GM12878 (cell line): ENCODE measurements at regions of chr17 and their contacts with region 1.

Region 1: DNA sequence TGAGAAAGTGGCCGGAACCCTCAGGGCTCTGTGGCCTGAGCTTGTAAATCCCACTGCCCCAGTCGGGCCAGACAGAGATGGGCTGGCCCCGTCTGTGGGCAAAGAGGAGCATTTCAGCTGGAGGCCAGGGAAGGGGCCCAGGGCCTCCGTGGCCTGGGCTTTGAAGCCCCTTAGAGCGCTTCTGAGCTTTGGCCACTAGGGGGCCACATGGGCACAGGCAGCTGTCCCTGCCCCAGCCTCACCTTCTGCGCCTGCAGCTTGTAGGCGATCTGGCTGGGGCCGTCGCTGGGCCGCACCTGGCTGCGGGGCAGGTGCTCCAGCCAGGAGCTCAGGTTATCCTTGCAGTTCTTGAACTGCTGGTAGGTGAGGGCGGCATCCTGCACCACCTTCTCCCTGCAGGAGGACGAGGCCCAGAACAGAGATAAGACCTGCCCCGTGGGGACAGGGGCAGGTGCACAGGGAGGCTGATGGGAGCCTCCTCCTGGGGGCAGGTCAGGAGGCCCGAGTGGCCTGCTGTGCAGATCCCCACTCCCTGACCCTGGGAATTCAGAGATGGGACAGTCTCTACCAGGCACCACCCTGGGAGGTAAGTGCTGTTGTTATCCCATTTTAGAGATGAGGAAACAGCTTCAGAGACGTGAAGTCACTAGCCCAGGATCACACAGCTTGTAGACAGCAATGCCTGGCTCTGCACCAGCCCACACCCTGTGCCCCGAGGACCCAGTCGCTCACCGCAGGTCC is 12.8 kb downstream of the EVPL start:
- DNase-seq: no peak
- ATAC-seq: peak; percentile 99
- H3K4me3 ChIP-seq: no peak overlapping the region
- H3K27ac ChIP-seq: no peak overlapping the region
- H3K4me1 ChIP-seq: no peaks in the 10 kb centered on the region
- H3K27me3 ChIP-seq: no peaks in the 10 kb centered on the region
- CTCF ChIP-seq: peak; percentile 86 to 99 (median 94)
- EP300 ChIP-seq: no peak
- POLR2A ChIP-seq: no peak
- RAD21 ChIP-seq: peak; percentile 80

Region 2: DNA sequence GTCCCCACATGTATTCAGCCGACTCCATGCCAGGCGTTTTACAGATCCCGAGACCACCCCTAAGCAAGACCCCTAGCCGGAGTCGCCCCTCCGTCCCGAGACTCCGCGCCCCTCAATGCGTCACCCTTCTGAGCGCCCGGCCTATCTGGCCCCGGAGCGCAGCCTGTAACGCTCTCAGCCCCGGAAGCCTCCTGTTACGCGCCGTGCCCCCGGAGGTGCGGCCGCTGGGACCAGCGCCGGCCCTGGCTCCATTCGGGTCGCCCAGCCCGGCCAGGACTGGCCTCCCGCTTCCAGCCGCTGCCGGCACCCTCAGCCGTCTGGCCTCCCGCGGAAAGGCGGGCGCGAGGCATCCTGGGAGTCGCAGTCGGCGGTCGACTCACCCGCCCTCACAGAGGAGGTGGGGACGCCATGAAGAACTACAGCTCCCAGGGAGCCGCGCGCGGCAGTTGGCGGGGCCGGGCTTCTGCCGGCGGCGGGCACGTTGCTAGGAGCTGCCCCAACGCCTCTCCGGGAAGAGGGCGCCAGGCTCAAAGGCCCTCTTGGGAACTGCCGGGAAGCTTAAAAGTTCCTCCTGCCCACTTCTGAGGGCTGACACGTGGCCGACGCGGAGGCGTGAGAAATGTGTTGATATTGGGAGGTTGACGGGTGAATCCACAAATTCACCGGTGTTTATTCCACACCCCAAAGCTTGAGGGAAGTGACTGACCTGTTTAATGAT is 73.5 kb before region 1 on chr17 and contains the start of gene FBF1:
- CTCF ChIA-PET with region 1: interaction called, 11 read pairs
- POLR2A ChIA-PET with region 1: no interaction called
- RAD21 ChIA-PET with region 1: no interaction called
- SMC1A ChIA-PET with region 1: interaction called, 3 read pairs
- in situ Hi-C with region 1: no loop called
- intact Hi-C with region 1: no loop called
- DNase-seq: peak; percentile 46
- ATAC-seq: peak; percentile 100
- H3K4me3 ChIP-seq: peak within 1 kb of the TSS; percentile 85
- H3K27ac ChIP-seq: peak within 1 kb of the TSS; percentile 65
- H3K4me1 ChIP-seq: no peaks in the 10 kb centered on the region
- H3K27me3 ChIP-seq: no peaks in the 10 kb centered on the region
- CTCF ChIP-seq: no peak
- EP300 ChIP-seq: no peak
- POLR2A ChIP-seq: peak; percentile 94
- RAD21 ChIP-seq: no peak
- polyA plus RNA-seq, gene FBF1: 0.29 to 0.35 TPM

Region 3: GRCh38 chr17:76063875-76064546 is 49.7 kb after region 1 on chr17:
- CTCF ChIA-PET with region 1: interaction called, 15 read pairs
- POLR2A ChIA-PET with region 1: no interaction called
- RAD21 ChIA-PET with region 1: no interaction called
- SMC1A ChIA-PET with region 1: no interaction called
- in situ Hi-C with region 1: no loop called
- intact Hi-C with region 1: no loop called
- DNase-seq: no peak
- ATAC-seq: peak; percentile 49
- H3K4me3 ChIP-seq: no peak overlapping the region
- H3K27ac ChIP-seq: no peak overlapping the region
- H3K4me1 ChIP-seq: no peaks in the 10 kb centered on the region
- H3K27me3 ChIP-seq: no peaks in the 10 kb centered on the region
- CTCF ChIP-seq: no peak
- EP300 ChIP-seq: no peak
- POLR2A ChIP-seq: no peak
- RAD21 ChIP-seq: no peak

Region 4: DNA sequence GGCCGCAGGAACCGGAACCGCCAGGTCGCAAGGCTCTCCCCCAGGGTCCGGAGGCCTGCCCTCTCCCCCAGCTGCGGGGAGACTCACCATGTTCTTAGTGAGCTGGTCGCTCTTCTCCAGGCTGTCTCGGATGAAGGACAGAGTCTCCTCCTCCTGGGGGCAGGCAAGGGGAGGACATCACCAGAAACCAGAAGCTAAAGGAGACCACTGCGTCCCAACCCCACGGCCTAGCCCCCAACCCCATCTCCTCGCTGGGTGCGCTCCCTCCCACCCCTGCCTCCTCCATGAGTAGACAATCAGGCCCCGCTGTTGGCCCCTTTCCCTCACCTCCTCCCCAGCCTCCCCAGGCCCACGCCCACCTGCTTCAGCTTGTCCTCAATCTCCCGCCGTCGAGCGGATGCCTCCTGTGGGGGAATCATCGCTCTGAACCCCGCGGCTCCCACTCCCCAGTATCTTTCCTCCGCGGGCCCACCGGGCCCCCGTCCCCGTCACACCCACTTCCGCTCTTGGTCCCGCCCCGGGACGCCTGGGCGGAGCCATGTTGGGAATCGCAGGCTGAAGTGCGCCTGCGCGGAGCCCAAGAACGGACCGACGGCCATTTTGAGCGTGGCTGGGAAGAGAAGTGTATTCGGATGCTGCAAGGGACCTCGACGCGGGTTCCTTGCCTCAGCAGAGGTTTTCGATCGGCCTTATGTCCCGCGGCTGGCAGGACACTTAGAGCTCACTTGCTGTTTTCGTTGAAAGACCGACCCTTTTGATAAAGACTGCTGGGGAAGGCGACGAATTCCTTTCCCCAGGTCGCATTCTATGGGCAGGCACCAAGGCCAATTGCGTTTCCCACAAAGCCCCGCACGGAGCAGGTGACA is 89.2 kb after region 1 on chr17 and contains the start of gene EXOC7:
- CTCF ChIA-PET with region 1: interaction called, 28 read pairs
- POLR2A ChIA-PET with region 1: no interaction called
- RAD21 ChIA-PET with region 1: interaction called, 4 read pairs
- SMC1A ChIA-PET with region 1: interaction called, 7 read pairs
- in situ Hi-C with region 1: no loop called
- intact Hi-C with region 1: loop called (anchors 2 kb)
- DNase-seq: peak; percentile 75
- ATAC-seq: peak; percentile 96
- H3K4me3 ChIP-seq: peak within 1 kb of the TSS; percentile 90
- H3K27ac ChIP-seq: peak within 1 kb of the TSS; percentile 71
- H3K4me1 ChIP-seq: peaks cover 6% of the 10 kb centered on the region
- H3K27me3 ChIP-seq: no peaks in the 10 kb centered on the region
- CTCF ChIP-seq: no peak
- EP300 ChIP-seq: no peak
- POLR2A ChIP-seq: peak; percentile 95
- RAD21 ChIP-seq: no peak
- polyA plus RNA-seq, gene EXOC7: 18.8 to 25.5 TPM

Region 5: GRCh38 chr17:76296186-76296585 is 281.8 kb after region 1 on chr17:
- CTCF ChIA-PET with region 1: interaction called, 47 read pairs
- POLR2A ChIA-PET with region 1: no interaction called
- RAD21 ChIA-PET with region 1: interaction called, 5 read pairs
- SMC1A ChIA-PET with region 1: interaction called, 7 read pairs
- in situ Hi-C with region 1: loop called (anchors 5 kb)
- intact Hi-C with region 1: loop called (anchors 1 kb)
- DNase-seq: no peak
- ATAC-seq: no peak
- H3K4me3 ChIP-seq: no peak overlapping the region
- H3K27ac ChIP-seq: no peak overlapping the region
- H3K4me1 ChIP-seq: no peaks in the 10 kb centered on the region
- H3K27me3 ChIP-seq: no peaks in the 10 kb centered on the region
- CTCF ChIP-seq: no peak
- EP300 ChIP-seq: no peak
- POLR2A ChIP-seq: no peak
- RAD21 ChIP-seq: no peak